Caco-2 (cell line): ENCODE measurements at regions of chr4 and their contacts with region 1.

Region 1: GRCh38 chr4:76585897-76586360 is 150.9 kb downstream of the SHROOM3 start:
- DNase-seq: peak; percentile 95
- H3K4me3 ChIP-seq: peak overlapping the region; percentile 46
- H3K4me3 Mint-ChIP-seq: peak overlapping the region; percentile 80
- H3K27ac Mint-ChIP-seq: peak overlapping the region; percentile 96
- H3K4me1 ChIP-seq: peaks cover 37% of the 10 kb centered on the region
- H3K4me1 Mint-ChIP-seq: peaks cover 22% of the 10 kb centered on the region
- H3K27me3 ChIP-seq: no peaks in the 10 kb centered on the region
- H3K27me3 Mint-ChIP-seq: no peaks in the 10 kb centered on the region
- CTCF ChIP-seq: peak in 1 of 2 experiments; percentile 39

Region 2: DNA sequence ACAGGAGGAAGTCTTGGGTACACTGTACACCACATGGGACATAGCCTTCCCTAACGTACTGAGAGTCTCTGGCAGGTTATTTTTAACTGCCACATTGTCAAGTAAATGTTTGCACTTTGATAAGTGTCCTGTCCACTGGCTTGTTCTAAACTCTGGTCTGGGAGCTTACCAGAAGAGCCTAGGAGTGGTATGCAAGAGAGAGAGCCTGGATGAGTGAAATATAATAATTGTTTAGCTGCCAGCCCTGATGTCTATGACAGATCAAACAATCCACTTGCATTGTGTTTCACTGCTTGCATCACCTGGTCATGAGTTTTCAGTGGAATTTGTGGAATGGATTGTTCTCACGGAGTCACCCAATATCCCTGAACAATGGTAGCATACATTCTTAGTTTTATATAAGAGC is 59.3 kb before region 1 on chr4:
- CTCF ChIA-PET with region 1: interaction called, 3 read pairs
- POLR2A ChIA-PET with region 1: interaction called, 6 read pairs
- intact Hi-C with region 1: loop called (anchors 5 kb)
- DNase-seq: peak; percentile 57 to 59
- H3K4me3 ChIP-seq: no peak overlapping the region
- H3K4me3 Mint-ChIP-seq: peak overlapping the region; percentile 35
- H3K27ac Mint-ChIP-seq: peak overlapping the region; percentile 94
- H3K4me1 ChIP-seq: peaks cover 18% of the 10 kb centered on the region
- H3K4me1 Mint-ChIP-seq: peaks cover 35% of the 10 kb centered on the region
- H3K27me3 ChIP-seq: no peaks in the 10 kb centered on the region
- H3K27me3 Mint-ChIP-seq: no peaks in the 10 kb centered on the region
- CTCF ChIP-seq: no peak

Region 3: GRCh38 chr4:76570141-76570973 is 15.6 kb before region 1 on chr4:
- CTCF ChIA-PET with region 1: interaction called, 13 read pairs
- POLR2A ChIA-PET with region 1: interaction called, 20 read pairs
- intact Hi-C with region 1: loop called (anchors 1 kb)
- DNase-seq: peak; percentile 73 to 76
- H3K4me3 ChIP-seq: no peak overlapping the region
- H3K4me3 Mint-ChIP-seq: peak overlapping the region; percentile 44
- H3K27ac Mint-ChIP-seq: peak overlapping the region; percentile 81
- H3K4me1 ChIP-seq: peaks cover 23% of the 10 kb centered on the region
- H3K4me1 Mint-ChIP-seq: peaks cover 44% of the 10 kb centered on the region
- H3K27me3 ChIP-seq: no peaks in the 10 kb centered on the region
- H3K27me3 Mint-ChIP-seq: no peaks in the 10 kb centered on the region
- CTCF ChIP-seq: no peak

Region 4: DNA sequence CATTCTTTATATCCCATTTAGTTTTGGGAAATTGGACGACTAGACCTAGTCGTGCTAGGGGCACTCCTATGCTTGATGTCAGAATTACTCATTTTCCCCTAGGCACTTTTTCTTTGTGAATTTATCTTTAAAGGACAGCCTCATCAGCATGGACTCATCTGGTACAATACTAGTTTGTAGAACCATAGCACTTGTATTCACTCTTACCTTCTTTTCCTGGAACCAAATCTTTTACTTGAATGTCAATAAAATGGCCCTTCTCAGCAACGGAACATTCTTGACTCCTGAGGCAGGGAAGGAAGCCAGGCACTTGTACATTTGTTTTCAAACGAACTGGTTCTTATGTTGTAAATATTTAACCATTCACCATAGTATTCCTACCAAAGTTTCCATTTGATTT is 36.2 kb after region 1 on chr4:
- CTCF ChIA-PET with region 1: interaction called, 3 read pairs
- POLR2A ChIA-PET with region 1: interaction called, 9 read pairs
- intact Hi-C with region 1: loop called (anchors 2 kb)
- DNase-seq: no peak
- H3K4me3 ChIP-seq: no peak overlapping the region
- H3K4me3 Mint-ChIP-seq: no peak overlapping the region
- H3K27ac Mint-ChIP-seq: peak overlapping the region; percentile 49
- H3K4me1 ChIP-seq: peaks cover 21% of the 10 kb centered on the region
- H3K4me1 Mint-ChIP-seq: peaks cover 14% of the 10 kb centered on the region
- H3K27me3 ChIP-seq: no peaks in the 10 kb centered on the region
- H3K27me3 Mint-ChIP-seq: no peaks in the 10 kb centered on the region
- CTCF ChIP-seq: no peak

Region 5: GRCh38 chr4:76733068-76733771 is 147.3 kb after region 1 on chr4:
- CTCF ChIA-PET with region 1: no interaction called
- POLR2A ChIA-PET with region 1: no interaction called
- intact Hi-C with region 1: loop called (anchors 1 kb)
- DNase-seq: peak in 1 of 2 experiments; percentile 42
- H3K4me3 ChIP-seq: no peak overlapping the region
- H3K4me3 Mint-ChIP-seq: no peak overlapping the region
- H3K27ac Mint-ChIP-seq: no peak overlapping the region
- H3K4me1 ChIP-seq: no peaks in the 10 kb centered on the region
- H3K4me1 Mint-ChIP-seq: no peaks in the 10 kb centered on the region
- H3K27me3 ChIP-seq: no peaks in the 10 kb centered on the region
- H3K27me3 Mint-ChIP-seq: no peaks in the 10 kb centered on the region
- CTCF ChIP-seq: peak; percentile 15 to 27

Region 6: DNA sequence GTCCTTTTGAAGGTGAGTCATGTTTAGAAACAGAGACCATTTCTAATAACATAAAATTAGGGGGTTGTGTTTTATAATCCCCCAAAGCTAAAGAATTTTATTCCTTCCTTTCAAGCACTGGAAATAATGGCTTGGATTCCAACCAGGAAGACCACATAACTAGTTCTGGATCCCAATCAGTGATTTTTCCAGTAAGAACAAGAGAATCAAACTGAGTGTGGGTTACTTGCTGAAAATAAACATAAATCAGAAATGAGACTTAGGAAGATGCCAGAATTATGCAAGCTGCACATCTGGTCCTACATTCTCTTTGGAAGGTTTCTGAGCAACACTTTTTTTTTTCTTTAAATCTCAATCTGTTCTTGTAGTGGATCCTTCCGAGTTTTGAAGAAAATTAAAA is 235.7 kb after region 1 on chr4:
- CTCF ChIA-PET with region 1: no interaction called
- POLR2A ChIA-PET with region 1: no interaction called
- intact Hi-C with region 1: no loop called
- DNase-seq: no peak
- H3K4me3 ChIP-seq: no peak overlapping the region
- H3K4me3 Mint-ChIP-seq: no peak overlapping the region
- H3K27ac Mint-ChIP-seq: no peak overlapping the region
- H3K4me1 ChIP-seq: no peaks in the 10 kb centered on the region
- H3K4me1 Mint-ChIP-seq: no peaks in the 10 kb centered on the region
- H3K27me3 ChIP-seq: no peaks in the 10 kb centered on the region
- H3K27me3 Mint-ChIP-seq: no peaks in the 10 kb centered on the region
- CTCF ChIP-seq: no peak